ENCODE measurements at regions of chr13 and their contacts with region 1.

Region 1: GRCh38 chr13:106536244-106537034 is 977 bp upstream of the EFNB2 start:
- ATAC-seq: peak; percentile 19 to 49 (median 29)
- H3K4me3 ChIP-seq: peak overlapping the region; percentile 76 to 95 (median 87)
- H3K27ac ChIP-seq: peak overlapping the region; percentile 9 to 11
- H3K4me1 ChIP-seq: no peaks in the 10 kb centered on the region

Region 2: DNA sequence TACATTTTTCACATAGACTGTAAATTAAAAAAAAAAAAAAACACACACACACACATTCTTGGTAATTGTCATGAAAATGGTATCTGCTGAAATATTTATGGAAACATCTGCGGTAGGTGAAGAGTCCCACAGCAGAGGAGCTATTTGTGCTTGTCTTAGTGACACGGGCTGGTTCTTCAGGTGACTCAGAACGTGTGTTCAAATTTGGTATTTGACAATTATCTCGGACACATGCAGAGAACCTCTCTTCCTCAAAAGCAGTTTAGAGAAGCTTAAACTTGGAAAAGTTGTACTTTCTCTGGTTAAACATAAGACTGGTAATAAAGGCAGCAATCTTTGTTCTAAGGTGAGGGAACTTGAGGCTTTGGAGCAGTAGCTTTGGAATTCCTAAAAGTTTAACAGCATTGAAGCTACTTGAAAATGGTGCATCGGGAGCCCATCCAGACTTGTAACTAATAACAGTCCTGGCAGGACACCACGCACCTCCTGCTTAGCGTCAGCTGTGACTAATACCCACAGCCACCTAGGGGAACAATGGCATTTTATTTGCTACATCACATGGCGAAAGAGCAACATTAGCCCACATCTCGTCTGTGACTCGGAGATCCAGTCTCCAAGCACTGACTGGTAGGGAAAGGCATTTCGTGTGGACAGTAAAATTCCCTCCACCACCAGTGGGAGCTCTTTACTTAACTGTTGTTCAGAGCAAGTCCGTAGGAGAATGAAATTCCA is 1965.1 kb before region 1 on chr13:
- in situ Hi-C with region 1: loop called in 1 of 9 experiments (anchors 25 kb)
- ATAC-seq: peak; percentile 64 to 100 (median 86)
- H3K4me3 ChIP-seq: no peak overlapping the region
- H3K27ac ChIP-seq: no peak overlapping the region
- H3K4me1 ChIP-seq: no peaks in the 10 kb centered on the region

Region 3: GRCh38 chr13:106083620-106084350 is 452.7 kb before region 1 on chr13:
- in situ Hi-C with region 1: loop called in 1 of 9 experiments (anchors 25 kb)
- ATAC-seq: peak in 2 of 8 experiments; percentile 33 to 37
- H3K4me3 ChIP-seq: no peak overlapping the region
- H3K27ac ChIP-seq: no peak overlapping the region
- H3K4me1 ChIP-seq: peaks cover 0 to 2% of the 10 kb centered on the region in 2 donors

Measured in motor neuron (in vitro differentiated cells).